ENCODE measurements at regions of chr5 and their contacts with region 1.

Region 1: DNA sequence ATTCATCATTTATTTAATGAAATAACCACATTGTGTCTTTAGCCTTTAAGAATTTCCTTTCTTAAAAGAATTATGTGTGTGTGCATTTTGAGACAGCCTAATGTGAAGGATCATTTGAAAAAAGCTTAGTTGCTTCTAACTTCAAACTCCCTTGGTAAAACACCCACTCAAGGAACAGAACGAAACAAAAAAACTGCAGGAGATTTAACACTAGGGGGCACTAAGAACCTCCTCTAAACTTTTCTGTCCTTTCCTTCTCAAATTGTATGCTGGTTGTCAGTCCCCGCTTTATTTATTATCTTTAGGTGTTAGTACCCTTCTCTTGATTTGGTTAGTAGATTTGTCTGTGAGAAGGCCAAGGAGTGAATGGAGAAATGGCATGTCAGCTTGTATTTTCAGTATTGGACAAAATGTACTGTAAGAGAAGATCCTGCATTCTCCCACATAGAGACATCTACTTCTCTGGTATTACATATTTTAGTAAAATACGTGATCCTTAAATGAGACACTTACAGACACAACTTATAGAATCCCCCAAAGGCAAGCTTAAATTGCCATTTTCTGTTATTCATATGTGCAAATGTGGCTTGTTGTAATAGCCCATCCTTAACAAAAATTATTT is 229.7 kb downstream of the MRPS30 start:
- DNase-seq: no peak
- ATAC-seq: peak in 1 of 2 donors; percentile 56
- H3K4me3 ChIP-seq: no peak overlapping the region
- H3K27ac ChIP-seq: no peak overlapping the region
- H3K4me1 ChIP-seq: peaks cover 0 to 15% of the 10 kb centered on the region in 2 donors
- H3K27me3 ChIP-seq: no peaks in the 10 kb centered on the region
- CTCF ChIP-seq: peak; percentile 29 to 63 (median 43)
- POLR2A ChIP-seq: no peak

Region 2: GRCh38 chr5:44821164-44821563 is 217.3 kb before region 1 on chr5:
- in situ Hi-C with region 1: no loop called
- intact Hi-C with region 1: no loop called
- DNase-seq: no peak
- ATAC-seq: no peak
- H3K4me3 ChIP-seq: no peak overlapping the region
- H3K27ac ChIP-seq: no peak overlapping the region
- H3K4me1 ChIP-seq: no peaks in the 10 kb centered on the region
- H3K27me3 ChIP-seq: no peaks in the 10 kb centered on the region
- CTCF ChIP-seq: no peak
- POLR2A ChIP-seq: no peak

Region 3: DNA sequence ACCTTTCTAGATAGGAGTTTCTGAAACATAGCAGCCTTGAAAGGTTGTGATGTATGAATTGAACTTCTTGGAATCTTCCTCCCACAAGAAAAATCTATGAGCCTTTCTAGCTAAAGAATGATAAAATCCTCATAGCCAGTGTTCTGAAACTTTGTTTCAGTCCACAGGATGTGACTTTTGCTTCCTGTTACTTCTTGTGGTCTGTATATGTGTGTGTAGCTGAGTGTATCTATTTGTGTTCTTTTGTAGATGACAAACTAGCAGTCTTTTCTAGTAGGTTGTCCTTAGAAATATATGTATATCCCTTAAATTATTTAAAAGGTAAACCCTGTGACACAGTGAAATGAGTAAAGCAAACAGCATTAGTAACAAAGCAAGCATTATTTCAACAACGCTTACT is 41.0 kb before region 1 on chr5:
- in situ Hi-C with region 1: no loop called
- intact Hi-C with region 1: no loop called
- DNase-seq: no peak
- ATAC-seq: no peak
- H3K4me3 ChIP-seq: no peak overlapping the region
- H3K27ac ChIP-seq: no peak overlapping the region
- H3K4me1 ChIP-seq: no peaks in the 10 kb centered on the region
- H3K27me3 ChIP-seq: no peaks in the 10 kb centered on the region
- CTCF ChIP-seq: no peak
- POLR2A ChIP-seq: no peak

Region 4: GRCh38 chr5:45512521-45512920 is 474.0 kb after region 1 on chr5:
- in situ Hi-C with region 1: loop called in 3 of 4 experiments (anchors 10 to 25 kb)
- intact Hi-C with region 1: no loop called
- DNase-seq: no peak
- ATAC-seq: no peak
- H3K4me3 ChIP-seq: no peak overlapping the region
- H3K27ac ChIP-seq: no peak overlapping the region
- H3K4me1 ChIP-seq: no peaks in the 10 kb centered on the region
- H3K27me3 ChIP-seq: no peaks in the 10 kb centered on the region
- CTCF ChIP-seq: no peak
- POLR2A ChIP-seq: no peak

Region 5: DNA sequence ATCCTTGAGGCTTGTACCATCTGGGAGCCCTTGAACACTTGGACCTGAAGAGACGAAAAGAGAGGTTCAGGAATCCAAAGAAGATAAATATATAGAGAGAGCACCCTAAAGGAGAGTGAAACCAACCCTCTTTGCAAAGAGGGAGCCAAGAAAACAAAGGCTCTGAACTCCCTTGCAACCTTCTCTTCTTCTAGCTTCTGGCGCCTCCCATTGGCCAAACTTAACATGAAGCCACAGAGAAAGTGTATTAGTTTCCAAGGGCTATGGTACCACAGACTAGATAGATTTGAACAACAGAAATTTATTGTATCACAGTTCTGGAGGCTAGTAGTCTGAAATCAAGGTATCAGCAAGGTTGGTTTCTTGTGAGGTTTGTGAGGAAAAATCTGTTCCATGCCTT is 482.6 kb after region 1 on chr5:
- in situ Hi-C with region 1: loop called in 3 of 4 experiments (anchors 10 to 25 kb)
- intact Hi-C with region 1: loop called (anchors 1 kb)
- DNase-seq: peak in 1 of 2 donors; percentile 21
- ATAC-seq: peak; percentile 36 to 66
- H3K4me3 ChIP-seq: peak overlapping the region in 1 of 4 donors; percentile 13
- H3K27ac ChIP-seq: no peak overlapping the region
- H3K4me1 ChIP-seq: peaks cover 0 to 5% of the 10 kb centered on the region in 2 donors
- H3K27me3 ChIP-seq: no peaks in the 10 kb centered on the region
- CTCF ChIP-seq: peak; percentile 12 to 40 (median 31)
- POLR2A ChIP-seq: no peak

Region 6: GRCh38 chr5:45696206-45696836 is 657.8 kb after region 1 on chr5 and contains the start of gene HCN1:
- in situ Hi-C with region 1: no loop called
- intact Hi-C with region 1: loop called (anchors 2 kb)
- DNase-seq: peak; percentile 52 to 58
- ATAC-seq: peak; percentile 92 to 97
- H3K4me3 ChIP-seq: peak within 1 kb of the TSS; percentile 39 to 56 (median 53)
- H3K27ac ChIP-seq: no peak within 1 kb of the TSS
- H3K4me1 ChIP-seq: peaks cover 0 to 11% of the 10 kb centered on the region in 2 donors
- H3K27me3 ChIP-seq: peaks cover 0 to 14% (median 0%) of the 10 kb centered on the region in 3 donors
- CTCF ChIP-seq: peak; percentile 23 to 78 (median 60)
- POLR2A ChIP-seq: no peak
- total RNA-seq, gene HCN1: 0.02 to 0.47 (median 0.20) TPM